ENCODE measurements at regions of chr4 and their contacts with region 1.

Region 1: GRCh38 chr4:70559211-70559830 is 32.7 kb upstream of the AMBN start:
- DNase-seq: peak; percentile 53 to 61
- H3K4me3 ChIP-seq: no peak overlapping the region
- H3K4me3 Mint-ChIP-seq: no peak overlapping the region
- H3K27ac Mint-ChIP-seq: no peak overlapping the region
- H3K4me1 ChIP-seq: peaks cover 14% of the 10 kb centered on the region
- H3K4me1 Mint-ChIP-seq: peaks cover 27% of the 10 kb centered on the region
- H3K27me3 ChIP-seq: no peaks in the 10 kb centered on the region
- H3K27me3 Mint-ChIP-seq: no peaks in the 10 kb centered on the region
- CTCF ChIP-seq: peak; percentile 78 to 83

Region 2: GRCh38 chr4:69689599-69689998 is 869.7 kb before region 1 on chr4:
- CTCF ChIA-PET with region 1: no interaction called
- POLR2A ChIA-PET with region 1: no interaction called
- intact Hi-C with region 1: loop called (anchors 1 kb)
- DNase-seq: peak in 1 of 2 experiments; percentile 37
- H3K4me3 ChIP-seq: no peak overlapping the region
- H3K4me3 Mint-ChIP-seq: no peak overlapping the region
- H3K27ac Mint-ChIP-seq: no peak overlapping the region
- H3K4me1 ChIP-seq: peaks cover 11% of the 10 kb centered on the region; the same call in 1 of the 2 replicates
- H3K4me1 Mint-ChIP-seq: peaks cover 6% of the 10 kb centered on the region
- H3K27me3 ChIP-seq: no peaks in the 10 kb centered on the region
- H3K27me3 Mint-ChIP-seq: no peaks in the 10 kb centered on the region
- CTCF ChIP-seq: peak; percentile 47 to 71

Region 3: DNA sequence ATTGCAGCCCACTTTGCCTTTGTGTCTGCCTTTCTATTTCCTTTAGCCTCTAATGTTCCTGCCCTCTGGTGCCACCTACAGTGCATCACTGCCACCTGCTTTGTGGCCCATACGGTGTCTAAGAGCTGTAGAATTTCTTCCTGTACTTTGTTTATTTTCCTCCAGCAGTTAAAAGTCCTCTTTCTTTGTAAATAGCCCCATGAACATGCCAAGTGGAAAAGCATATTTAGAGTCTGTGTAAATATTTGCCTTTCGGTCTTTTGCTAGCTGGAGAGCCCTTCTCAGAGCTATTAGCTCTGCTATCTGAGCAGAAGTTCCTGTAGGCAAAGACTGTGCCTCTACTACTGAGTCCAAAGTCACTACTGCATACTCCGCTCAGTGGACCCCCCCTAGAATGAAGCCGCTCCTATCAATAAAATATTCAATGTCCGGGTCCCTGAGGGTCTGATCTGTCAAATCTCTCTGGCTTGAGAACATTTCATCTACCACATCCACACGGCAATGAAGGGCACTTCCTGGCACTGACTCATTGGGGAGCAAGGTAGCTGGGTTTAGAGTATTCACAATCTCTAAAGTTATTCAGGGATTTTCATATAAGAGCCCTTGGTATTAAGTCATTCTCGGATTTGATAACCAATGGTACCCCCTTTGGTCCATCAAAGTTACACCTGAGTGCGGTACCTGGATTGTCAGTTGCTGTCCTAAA is 735.7 kb before region 1 on chr4:
- CTCF ChIA-PET with region 1: no interaction called
- POLR2A ChIA-PET with region 1: no interaction called
- intact Hi-C with region 1: loop called (anchors 5 kb)
- DNase-seq: peak; percentile 76 to 82
- H3K4me3 ChIP-seq: no peak overlapping the region
- H3K4me3 Mint-ChIP-seq: no peak overlapping the region
- H3K27ac Mint-ChIP-seq: peak overlapping the region; percentile 75
- H3K4me1 ChIP-seq: peaks cover 23% of the 10 kb centered on the region
- H3K4me1 Mint-ChIP-seq: peaks cover 6% of the 10 kb centered on the region
- H3K27me3 ChIP-seq: no peaks in the 10 kb centered on the region
- H3K27me3 Mint-ChIP-seq: no peaks in the 10 kb centered on the region
- CTCF ChIP-seq: peak; percentile 56 to 73

Region 4: GRCh38 chr4:69896530-69897116 is 662.7 kb before region 1 on chr4:
- CTCF ChIA-PET with region 1: no interaction called
- POLR2A ChIA-PET with region 1: no interaction called
- intact Hi-C with region 1: loop called (anchors 1 kb)
- DNase-seq: no peak
- H3K4me3 ChIP-seq: no peak overlapping the region
- H3K4me3 Mint-ChIP-seq: no peak overlapping the region
- H3K27ac Mint-ChIP-seq: no peak overlapping the region
- H3K4me1 ChIP-seq: peaks cover 14% of the 10 kb centered on the region
- H3K4me1 Mint-ChIP-seq: peaks cover 13% of the 10 kb centered on the region
- H3K27me3 ChIP-seq: no peaks in the 10 kb centered on the region
- H3K27me3 Mint-ChIP-seq: no peaks in the 10 kb centered on the region
- CTCF ChIP-seq: peak; percentile 41 to 50

Region 5: DNA sequence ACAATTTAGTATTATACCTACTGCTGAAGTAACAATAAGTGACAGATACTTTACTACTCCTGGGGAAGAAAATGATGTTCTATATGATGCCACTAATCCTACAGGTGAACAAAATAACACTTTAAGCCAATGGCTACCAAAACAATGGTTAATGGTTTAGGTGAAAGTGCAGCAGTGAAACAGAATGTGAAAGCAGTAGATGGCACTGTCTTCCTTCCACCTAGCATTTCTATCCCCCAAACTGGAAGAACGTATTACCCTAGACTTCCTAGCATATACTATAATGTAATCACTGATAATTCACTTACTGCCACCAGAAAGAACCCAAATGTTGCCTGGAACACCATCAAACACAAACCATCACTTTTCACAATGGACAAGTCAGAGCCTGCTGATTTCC is 243.4 kb before region 1 on chr4:
- CTCF ChIA-PET with region 1: no interaction called
- POLR2A ChIA-PET with region 1: no interaction called
- intact Hi-C with region 1: loop called (anchors 2 kb)
- DNase-seq: no peak
- H3K4me3 ChIP-seq: no peak overlapping the region
- H3K4me3 Mint-ChIP-seq: no peak overlapping the region
- H3K27ac Mint-ChIP-seq: no peak overlapping the region
- H3K4me1 ChIP-seq: no peaks in the 10 kb centered on the region
- H3K4me1 Mint-ChIP-seq: no peaks in the 10 kb centered on the region
- H3K27me3 ChIP-seq: no peaks in the 10 kb centered on the region
- H3K27me3 Mint-ChIP-seq: peaks cover 3% of the 10 kb centered on the region
- CTCF ChIP-seq: no peak

Region 6: GRCh38 chr4:70505151-70505748 is 54.1 kb before region 1 on chr4:
- CTCF ChIA-PET with region 1: no interaction called
- POLR2A ChIA-PET with region 1: no interaction called
- intact Hi-C with region 1: loop called (anchors 1 kb)
- DNase-seq: peak; percentile 43 to 71
- H3K4me3 ChIP-seq: no peak overlapping the region
- H3K4me3 Mint-ChIP-seq: no peak overlapping the region
- H3K27ac Mint-ChIP-seq: no peak overlapping the region
- H3K4me1 ChIP-seq: no peaks in the 10 kb centered on the region
- H3K4me1 Mint-ChIP-seq: no peaks in the 10 kb centered on the region
- H3K27me3 ChIP-seq: no peaks in the 10 kb centered on the region
- H3K27me3 Mint-ChIP-seq: no peaks in the 10 kb centered on the region
- CTCF ChIP-seq: peak; percentile 86 to 94

Measured in Caco-2 (cell line).